CD14-positive monocyte (primary cell): ENCODE measurements at regions of chr13 and their contacts with region 1.

Region 1: DNA sequence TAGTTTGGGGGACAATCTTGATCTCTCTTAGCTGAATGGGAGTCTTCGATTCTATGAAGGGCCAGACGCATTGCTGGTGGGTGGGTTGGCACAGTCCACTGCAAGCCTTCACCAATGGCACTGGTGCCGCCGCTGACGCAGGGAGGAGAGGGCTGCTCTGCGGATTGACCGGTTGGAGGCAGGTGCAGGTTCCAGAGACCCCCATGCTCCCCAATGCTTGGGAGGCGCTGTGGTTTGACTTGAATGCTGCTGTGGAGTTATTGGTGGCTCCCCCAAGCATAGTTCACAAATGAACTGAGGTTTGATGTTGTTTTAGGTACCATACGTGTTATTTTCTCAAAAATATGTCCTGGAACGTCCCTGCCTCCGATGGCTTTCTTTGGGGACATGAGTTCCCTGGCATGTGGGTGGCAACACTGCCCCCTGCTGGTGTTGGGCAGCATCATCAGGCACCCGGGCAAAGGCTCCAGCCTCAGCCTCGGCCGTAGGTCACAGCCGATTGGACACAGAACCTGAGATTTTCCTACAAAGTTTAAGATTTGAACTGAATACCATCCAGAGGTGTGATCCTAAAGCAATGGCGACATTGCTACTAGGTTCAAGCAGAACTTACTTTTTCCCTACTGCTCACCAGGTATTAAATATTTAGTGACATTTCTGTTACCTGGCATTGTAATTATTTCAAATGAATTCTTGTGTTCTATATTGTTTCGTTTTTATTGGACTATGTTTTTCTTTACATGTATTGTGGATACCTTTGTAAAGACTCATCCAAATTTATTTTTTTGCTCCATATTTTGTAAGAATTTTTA is 95.5 kb downstream of the ANKRD10 start:
- DNase-seq: peak; percentile 61 to 70 (median 62)
- H3K4me3 ChIP-seq: no peak overlapping the region
- H3K4me3 Mint-ChIP-seq: no peak overlapping the region
- H3K27ac ChIP-seq: no peak overlapping the region
- H3K27ac Mint-ChIP-seq: no peak overlapping the region
- H3K4me1 ChIP-seq: no peaks in the 10 kb centered on the region
- H3K4me1 Mint-ChIP-seq: peaks cover 2% of the 10 kb centered on the region
- H3K27me3 ChIP-seq: no peaks in the 10 kb centered on the region
- H3K27me3 Mint-ChIP-seq: peaks cover 2 to 7% (median 6%) of the 10 kb centered on the region in 3 donors
- CTCF ChIP-seq: peak; percentile 96

Region 2: GRCh38 chr13:110220471-110220870 is 598.9 kb before region 1 on chr13:
- intact Hi-C with region 1: loop called in 1 of 2 experiments (anchors 5 kb)
- DNase-seq: peak; percentile 27 to 45 (median 34)
- H3K4me3 ChIP-seq: no peak overlapping the region
- H3K4me3 Mint-ChIP-seq: peak overlapping the region in 1 of 2 donors; percentile 44
- H3K27ac ChIP-seq: no peak overlapping the region
- H3K27ac Mint-ChIP-seq: peak overlapping the region in 1 of 7 donors; percentile 38
- H3K4me1 ChIP-seq: peaks cover 6 to 8% of the 10 kb centered on the region in 2 donors
- H3K4me1 Mint-ChIP-seq: peaks cover 5% of the 10 kb centered on the region
- H3K27me3 ChIP-seq: peaks cover 0 to 8% of the 10 kb centered on the region in 2 donors
- H3K27me3 Mint-ChIP-seq: peaks cover 14 to 18% (median 14%) of the 10 kb centered on the region in 3 donors
- CTCF ChIP-seq: no peak

Region 3: DNA sequence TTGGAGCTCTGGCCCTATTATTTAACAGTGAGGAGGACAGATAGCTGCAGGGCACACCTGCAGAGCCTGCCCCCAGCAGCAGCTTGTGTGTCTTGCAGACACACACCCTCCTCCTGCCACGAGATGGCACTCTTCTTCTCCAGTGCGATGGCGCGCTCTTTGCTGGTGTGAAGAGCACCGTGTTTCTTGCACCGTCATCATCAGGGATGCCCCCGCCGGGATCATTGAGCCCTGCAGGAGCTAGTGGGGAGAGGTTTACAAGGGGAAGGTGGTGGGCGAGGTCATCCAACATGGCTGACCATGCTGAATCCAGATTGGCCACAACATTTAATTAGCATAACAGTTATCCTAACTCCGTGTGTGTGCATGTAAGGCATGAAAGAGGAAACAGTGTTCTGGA is 363.5 kb before region 1 on chr13:
- intact Hi-C with region 1: loop called in 1 of 2 experiments (anchors 10 kb)
- DNase-seq: peak; percentile 58 to 85 (median 66)
- H3K4me3 ChIP-seq: peak overlapping the region in 1 of 3 experiments; percentile 39
- H3K4me3 Mint-ChIP-seq: peak overlapping the region; percentile 53 to 80
- H3K27ac ChIP-seq: no peak overlapping the region
- H3K27ac Mint-ChIP-seq: peak overlapping the region in 4 of 7 donors; percentile 16 to 87 (median 30)
- H3K4me1 ChIP-seq: peaks cover 6 to 7% of the 10 kb centered on the region in 2 donors
- H3K4me1 Mint-ChIP-seq: peaks cover 7% of the 10 kb centered on the region
- H3K27me3 ChIP-seq: no peaks in the 10 kb centered on the region
- H3K27me3 Mint-ChIP-seq: peaks cover 6 to 15% (median 12%) of the 10 kb centered on the region in 3 donors
- CTCF ChIP-seq: peak; percentile 90

Region 4: GRCh38 chr13:110593430-110594130 is 225.8 kb before region 1 on chr13:
- intact Hi-C with region 1: loop called in 1 of 2 experiments (anchors 5 kb)
- DNase-seq: peak; percentile 48 to 64 (median 63)
- H3K4me3 ChIP-seq: no peak overlapping the region
- H3K4me3 Mint-ChIP-seq: no peak overlapping the region
- H3K27ac ChIP-seq: no peak overlapping the region
- H3K27ac Mint-ChIP-seq: peak overlapping the region in 1 of 7 donors; percentile 66
- H3K4me1 ChIP-seq: no peaks in the 10 kb centered on the region
- H3K4me1 Mint-ChIP-seq: no peaks in the 10 kb centered on the region
- H3K27me3 ChIP-seq: no peaks in the 10 kb centered on the region
- H3K27me3 Mint-ChIP-seq: peaks cover 0 to 3% (median 2%) of the 10 kb centered on the region in 3 donors
- CTCF ChIP-seq: peak; percentile 76

Region 5: DNA sequence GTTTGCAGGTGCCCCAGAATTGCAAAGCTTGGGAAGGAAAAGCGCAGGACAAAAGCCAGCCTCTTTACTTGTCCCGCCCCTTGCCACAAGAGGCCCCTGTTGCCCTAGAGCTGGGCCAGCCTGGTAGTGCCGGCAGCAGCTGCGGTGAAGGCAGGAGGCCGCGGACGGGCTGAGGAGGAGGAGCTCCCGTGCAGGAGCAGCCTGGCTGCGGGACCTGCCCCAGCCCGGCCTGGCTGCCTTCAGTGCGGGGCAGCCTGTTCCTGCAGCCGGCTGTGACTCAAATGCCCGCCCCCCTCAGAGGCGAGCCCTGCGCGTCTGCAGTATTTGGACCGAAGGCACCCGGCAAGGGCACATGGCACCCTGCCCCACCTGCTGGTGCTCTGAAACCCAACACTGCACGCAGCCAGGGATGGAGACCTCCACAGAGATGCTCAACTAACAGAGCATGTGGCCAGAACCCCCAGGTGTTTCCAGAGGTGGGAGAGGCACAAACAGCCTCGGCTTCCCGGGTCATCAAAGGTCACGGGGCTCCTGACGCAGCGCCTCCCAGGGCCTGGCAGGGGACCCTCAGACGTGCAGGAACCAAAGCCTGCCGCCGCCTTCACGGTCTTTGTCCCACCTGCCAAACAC is 174.4 kb before region 1 on chr13:
- intact Hi-C with region 1: loop called (anchors 2 to 5 kb)
- DNase-seq: peak; percentile 74 to 76 (median 75)
- H3K4me3 ChIP-seq: peak overlapping the region in 1 of 3 experiments; percentile 55
- H3K4me3 Mint-ChIP-seq: peak overlapping the region in 1 of 2 donors; percentile 30
- H3K27ac ChIP-seq: peak overlapping the region in 1 of 2 donors; percentile 59
- H3K27ac Mint-ChIP-seq: peak overlapping the region in 2 of 7 donors; percentile 42 to 53
- H3K4me1 ChIP-seq: peaks cover 8 to 16% of the 10 kb centered on the region in 2 donors
- H3K4me1 Mint-ChIP-seq: peaks cover 16% of the 10 kb centered on the region
- H3K27me3 ChIP-seq: no peaks in the 10 kb centered on the region
- H3K27me3 Mint-ChIP-seq: no peaks in the 10 kb centered on the region
- CTCF ChIP-seq: peak; percentile 76